ENCODE measurements at regions of chr12 and their contacts with region 1.

Region 1: DNA sequence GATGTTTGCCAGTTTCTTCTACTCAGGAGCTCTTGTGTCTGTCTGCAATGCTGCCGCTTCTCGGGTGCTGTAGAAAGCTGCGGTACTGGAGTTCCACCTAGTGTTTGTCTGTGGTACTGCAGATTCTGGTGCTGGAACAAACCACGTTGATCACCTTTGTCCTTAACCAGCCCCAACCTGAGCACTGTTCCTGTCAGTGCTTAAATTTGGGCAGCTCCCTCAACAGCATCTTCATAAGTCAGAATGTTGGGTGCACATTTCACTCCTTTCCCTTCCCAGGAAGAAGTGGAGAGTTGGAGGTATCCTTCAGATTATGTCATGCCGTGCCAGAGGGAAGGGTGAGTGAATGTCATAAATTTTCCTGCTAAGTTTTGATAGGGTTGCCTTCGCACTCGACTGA is 48.7 kb upstream of the LALBA start:
- DNase-seq: peak; percentile 51 to 87 (median 68)
- ATAC-seq: peak; percentile 95
- H3K4me3 ChIP-seq: no peak overlapping the region
- H3K4me3 Mint-ChIP-seq: no peak overlapping the region
- H3K27ac ChIP-seq: no peak overlapping the region
- H3K27ac Mint-ChIP-seq: no peak overlapping the region
- H3K4me1 ChIP-seq: no peaks in the 10 kb centered on the region
- H3K4me1 Mint-ChIP-seq: no peaks in the 10 kb centered on the region
- H3K27me3 ChIP-seq: peaks cover 0 to 11% of the 10 kb centered on the region in 2 experiments
- H3K27me3 Mint-ChIP-seq: peaks cover 54% of the 10 kb centered on the region
- CTCF ChIP-seq: peak; percentile 95

Region 2: GRCh38 chr12:47949441-47950308 is 668.9 kb before region 1 on chr12:
- CTCF ChIA-PET with region 1: no interaction called
- POLR2A ChIA-PET with region 1: no interaction called
- intact Hi-C with region 1: loop called (anchors 5 to 10 kb)
- DNase-seq: peak; percentile 11 to 72 (median 38)
- ATAC-seq: peak; percentile 73
- H3K4me3 ChIP-seq: no peak overlapping the region
- H3K4me3 Mint-ChIP-seq: no peak overlapping the region
- H3K27ac ChIP-seq: no peak overlapping the region
- H3K27ac Mint-ChIP-seq: no peak overlapping the region
- H3K4me1 ChIP-seq: peaks cover 5% of the 10 kb centered on the region
- H3K4me1 Mint-ChIP-seq: no peaks in the 10 kb centered on the region
- H3K27me3 ChIP-seq: no peaks in the 10 kb centered on the region
- H3K27me3 Mint-ChIP-seq: peaks cover 4% of the 10 kb centered on the region
- CTCF ChIP-seq: peak; percentile 74

Region 3: GRCh38 chr12:48084066-48084465 is 534.5 kb before region 1 on chr12:
- CTCF ChIA-PET with region 1: interaction called, 3 read pairs
- POLR2A ChIA-PET with region 1: no interaction called
- intact Hi-C with region 1: loop called (anchors 2 to 5 kb)
- DNase-seq: peak in 2 of 14 experiments; percentile 27 to 37
- ATAC-seq: no peak
- H3K4me3 ChIP-seq: no peak overlapping the region
- H3K4me3 Mint-ChIP-seq: no peak overlapping the region
- H3K27ac ChIP-seq: no peak overlapping the region
- H3K27ac Mint-ChIP-seq: no peak overlapping the region
- H3K4me1 ChIP-seq: no peaks in the 10 kb centered on the region
- H3K4me1 Mint-ChIP-seq: no peaks in the 10 kb centered on the region
- H3K27me3 ChIP-seq: no peaks in the 10 kb centered on the region
- H3K27me3 Mint-ChIP-seq: no peaks in the 10 kb centered on the region
- CTCF ChIP-seq: peak; percentile 17

Region 4: DNA sequence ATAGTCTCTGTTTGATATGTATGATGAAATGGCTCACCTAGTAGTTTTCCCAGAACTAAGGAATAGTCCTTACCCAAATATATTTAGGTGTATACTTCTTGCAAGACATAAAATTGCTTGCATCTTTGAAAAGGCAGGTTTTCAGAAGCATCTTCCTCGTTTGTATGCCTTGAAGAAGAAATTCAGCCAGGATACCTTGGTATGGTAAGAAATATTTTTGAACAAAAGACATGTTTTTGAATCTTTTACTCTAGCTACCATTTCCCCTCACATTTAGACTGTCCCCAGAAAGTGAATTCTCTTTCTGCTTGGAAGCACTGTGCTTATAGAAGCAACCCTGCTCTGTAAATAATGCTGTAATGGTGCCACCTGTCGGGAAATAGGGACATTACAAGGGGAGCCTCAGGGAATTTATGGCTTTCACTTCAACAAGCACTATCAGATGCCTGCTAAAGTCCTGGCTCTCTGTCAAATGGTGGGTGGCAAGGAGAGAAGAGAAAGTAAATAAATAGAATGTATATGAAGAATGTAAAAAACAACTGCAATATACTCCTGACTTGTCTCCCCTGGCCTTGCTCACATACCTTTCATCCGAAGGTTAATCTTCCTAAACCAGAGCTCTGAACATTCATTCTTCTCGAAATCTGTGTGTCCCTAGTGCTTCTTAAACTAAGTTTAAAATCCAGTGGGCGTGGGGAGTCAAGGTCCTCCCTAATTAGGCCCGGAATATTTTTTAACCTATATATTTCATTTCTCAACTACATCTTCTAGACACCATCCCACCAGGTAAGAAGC is 429.0 kb before region 1 on chr12:
- CTCF ChIA-PET with region 1: no interaction called
- POLR2A ChIA-PET with region 1: no interaction called
- intact Hi-C with region 1: loop called in 1 of 2 experiments (anchors 5 kb)
- DNase-seq: peak; percentile 43 to 83 (median 66)
- ATAC-seq: peak; percentile 91
- H3K4me3 ChIP-seq: no peak overlapping the region
- H3K4me3 Mint-ChIP-seq: no peak overlapping the region
- H3K27ac ChIP-seq: no peak overlapping the region
- H3K27ac Mint-ChIP-seq: no peak overlapping the region
- H3K4me1 ChIP-seq: peaks cover 3% of the 10 kb centered on the region
- H3K4me1 Mint-ChIP-seq: no peaks in the 10 kb centered on the region
- H3K27me3 ChIP-seq: peaks cover 8 to 11% of the 10 kb centered on the region in 2 experiments
- H3K27me3 Mint-ChIP-seq: peaks cover 23% of the 10 kb centered on the region
- CTCF ChIP-seq: peak; percentile 80

Region 5: DNA sequence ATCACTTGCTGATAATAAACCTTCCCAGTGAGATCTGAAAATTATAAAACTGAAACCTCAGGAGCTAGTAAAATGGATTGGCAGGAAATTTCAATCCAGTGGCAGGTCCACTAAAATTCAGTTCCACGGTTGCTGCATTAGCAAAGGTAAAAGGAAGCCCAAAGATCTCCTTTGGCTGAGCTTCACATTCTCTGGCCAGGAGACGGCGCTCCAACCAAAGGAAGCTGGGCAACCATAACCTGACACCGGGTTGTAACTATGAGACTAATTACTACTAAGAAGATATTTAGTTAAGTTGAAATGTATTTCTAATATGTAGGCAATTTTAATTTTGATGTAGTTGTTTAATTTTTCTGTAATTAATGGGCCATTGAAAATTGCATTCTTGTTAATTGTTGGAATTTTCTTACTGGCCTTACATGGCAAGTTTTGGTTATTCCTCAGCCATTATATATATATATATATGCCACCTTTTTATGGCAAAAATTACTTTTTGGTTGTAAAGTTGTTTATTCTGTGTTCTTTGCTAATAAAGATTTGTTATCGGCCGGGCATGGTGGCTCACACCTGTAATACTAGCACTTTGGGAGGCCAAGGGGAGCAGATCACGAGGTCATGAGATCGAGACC is 76.1 kb before region 1 on chr12:
- CTCF ChIA-PET with region 1: interaction called, 18 read pairs
- POLR2A ChIA-PET with region 1: no interaction called
- intact Hi-C with region 1: loop called (anchors 1 kb)
- DNase-seq: peak in 13 of 14 experiments; percentile 19 to 49 (median 41)
- ATAC-seq: no peak
- H3K4me3 ChIP-seq: no peak overlapping the region
- H3K4me3 Mint-ChIP-seq: no peak overlapping the region
- H3K27ac ChIP-seq: no peak overlapping the region
- H3K27ac Mint-ChIP-seq: no peak overlapping the region
- H3K4me1 ChIP-seq: no peaks in the 10 kb centered on the region
- H3K4me1 Mint-ChIP-seq: no peaks in the 10 kb centered on the region
- H3K27me3 ChIP-seq: no peaks in the 10 kb centered on the region
- H3K27me3 Mint-ChIP-seq: peaks cover 8% of the 10 kb centered on the region
- CTCF ChIP-seq: peak; percentile 43